ENCODE measurements at regions of chr6 and their contacts with region 1.

Region 1: GRCh38 chr6:41920921-41921711 is at the starts of genes BYSL and MED20:
- DNase-seq: peak; percentile 96
- H3K4me3 Mint-ChIP-seq: peak within 1 kb of the TSS; percentile 99
- H3K27ac Mint-ChIP-seq: peak within 1 kb of the TSS; percentile 99
- H3K4me1 Mint-ChIP-seq: peaks cover 41% of the 10 kb centered on the region
- H3K27me3 Mint-ChIP-seq: no peaks in the 10 kb centered on the region
- CTCF ChIP-seq: peak; percentile 98
- total RNA-seq, gene BYSL: 51.7 and 55.6 TPM in 2 replicates
- total RNA-seq, gene MED20: 28.0 and 29.8 TPM in 2 replicates

Region 2: GRCh38 chr6:41787219-41787917 is 133.7 kb before region 1 on chr6 and contains the start of gene TOMM6:
- CTCF ChIA-PET with region 1: interaction called, 29 read pairs
- intact Hi-C with region 1: no loop called
- DNase-seq: peak; percentile 98
- H3K4me3 Mint-ChIP-seq: peak within 1 kb of the TSS; percentile 95
- H3K27ac Mint-ChIP-seq: peak within 1 kb of the TSS; percentile 94
- H3K4me1 Mint-ChIP-seq: peaks cover 36% of the 10 kb centered on the region
- H3K27me3 Mint-ChIP-seq: no peaks in the 10 kb centered on the region
- CTCF ChIP-seq: peak; percentile 95
- total RNA-seq, gene TOMM6: 251 and 265 TPM in 2 replicates

Region 3: GRCh38 chr6:41936073-41936837 is 15.1 kb after region 1 on chr6:
- CTCF ChIA-PET with region 1: interaction called, 17 read pairs
- intact Hi-C with region 1: loop called (anchors 2 kb)
- DNase-seq: peak; percentile 80
- H3K4me3 Mint-ChIP-seq: no peak overlapping the region
- H3K27ac Mint-ChIP-seq: no peak overlapping the region
- H3K4me1 Mint-ChIP-seq: peaks cover 30% of the 10 kb centered on the region
- H3K27me3 Mint-ChIP-seq: no peaks in the 10 kb centered on the region
- CTCF ChIP-seq: peak; percentile 86

Region 4: DNA sequence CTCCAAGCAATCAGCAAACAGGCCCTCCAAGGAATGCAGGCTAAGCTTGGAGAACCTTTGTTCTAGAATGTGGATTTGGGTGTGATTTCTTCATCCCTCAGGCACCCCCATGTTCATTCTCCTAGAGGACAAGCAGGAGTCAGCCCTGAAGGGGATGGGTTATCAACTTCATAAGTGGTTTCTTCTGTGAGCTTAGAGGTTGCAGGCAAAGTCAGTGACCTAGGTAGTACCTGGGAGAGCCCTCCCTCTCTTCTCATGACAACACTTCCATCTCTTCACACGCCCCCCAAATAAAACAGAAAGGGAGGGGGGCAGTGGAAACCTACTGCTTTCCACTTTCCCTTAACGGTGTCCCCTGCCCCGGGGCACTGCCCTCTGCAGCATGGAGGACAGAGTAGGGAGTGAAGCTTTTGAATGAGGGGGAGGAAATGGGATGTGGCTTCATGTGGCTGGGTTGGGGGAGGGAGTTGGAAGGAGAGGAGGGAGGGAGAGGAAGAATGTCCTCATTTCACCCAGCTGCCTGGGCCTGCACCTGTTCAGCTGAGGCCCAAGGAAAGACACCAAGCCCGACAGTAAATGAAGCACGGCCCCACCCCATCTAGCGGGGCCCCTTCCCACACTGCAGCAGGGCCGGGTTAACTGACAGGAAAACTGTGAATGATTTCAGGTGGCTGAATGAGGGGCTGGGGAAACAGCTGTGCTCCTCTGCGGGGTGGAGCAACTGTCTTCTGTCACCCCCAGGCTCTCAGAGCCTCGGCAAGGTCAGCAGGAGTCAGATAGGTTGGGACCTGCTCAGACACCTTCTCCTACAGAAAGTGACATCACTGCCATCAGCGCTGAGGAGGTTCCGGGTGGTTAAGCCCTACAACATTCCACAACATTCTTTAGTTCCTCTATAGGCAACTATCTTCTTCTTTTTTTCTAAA is 89.1 kb after region 1 on chr6:
- CTCF ChIA-PET with region 1: interaction called, 15 read pairs
- intact Hi-C with region 1: no loop called
- DNase-seq: no peak
- H3K4me3 Mint-ChIP-seq: no peak overlapping the region
- H3K27ac Mint-ChIP-seq: no peak overlapping the region
- H3K4me1 Mint-ChIP-seq: no peaks in the 10 kb centered on the region
- H3K27me3 Mint-ChIP-seq: no peaks in the 10 kb centered on the region
- CTCF ChIP-seq: no peak

Region 5: GRCh38 chr6:42571611-42572342 is 650.7 kb after region 1 on chr6:
- CTCF ChIA-PET with region 1: interaction called, 12 read pairs
- intact Hi-C with region 1: no loop called
- DNase-seq: no peak
- H3K4me3 Mint-ChIP-seq: no peak overlapping the region
- H3K27ac Mint-ChIP-seq: no peak overlapping the region
- H3K4me1 Mint-ChIP-seq: peaks cover 8% of the 10 kb centered on the region
- H3K27me3 Mint-ChIP-seq: no peaks in the 10 kb centered on the region
- CTCF ChIP-seq: no peak

Region 6: GRCh38 chr6:43024436-43024835 is 1103.3 kb after region 1 on chr6:
- CTCF ChIA-PET with region 1: no interaction called
- intact Hi-C with region 1: no loop called
- DNase-seq: no peak
- H3K4me3 Mint-ChIP-seq: no peak overlapping the region
- H3K27ac Mint-ChIP-seq: no peak overlapping the region
- H3K4me1 Mint-ChIP-seq: no peaks in the 10 kb centered on the region
- H3K27me3 Mint-ChIP-seq: no peaks in the 10 kb centered on the region
- CTCF ChIP-seq: no peak